ENCODE measurements at regions of chr1 and their contacts with region 1.

Region 1: DNA sequence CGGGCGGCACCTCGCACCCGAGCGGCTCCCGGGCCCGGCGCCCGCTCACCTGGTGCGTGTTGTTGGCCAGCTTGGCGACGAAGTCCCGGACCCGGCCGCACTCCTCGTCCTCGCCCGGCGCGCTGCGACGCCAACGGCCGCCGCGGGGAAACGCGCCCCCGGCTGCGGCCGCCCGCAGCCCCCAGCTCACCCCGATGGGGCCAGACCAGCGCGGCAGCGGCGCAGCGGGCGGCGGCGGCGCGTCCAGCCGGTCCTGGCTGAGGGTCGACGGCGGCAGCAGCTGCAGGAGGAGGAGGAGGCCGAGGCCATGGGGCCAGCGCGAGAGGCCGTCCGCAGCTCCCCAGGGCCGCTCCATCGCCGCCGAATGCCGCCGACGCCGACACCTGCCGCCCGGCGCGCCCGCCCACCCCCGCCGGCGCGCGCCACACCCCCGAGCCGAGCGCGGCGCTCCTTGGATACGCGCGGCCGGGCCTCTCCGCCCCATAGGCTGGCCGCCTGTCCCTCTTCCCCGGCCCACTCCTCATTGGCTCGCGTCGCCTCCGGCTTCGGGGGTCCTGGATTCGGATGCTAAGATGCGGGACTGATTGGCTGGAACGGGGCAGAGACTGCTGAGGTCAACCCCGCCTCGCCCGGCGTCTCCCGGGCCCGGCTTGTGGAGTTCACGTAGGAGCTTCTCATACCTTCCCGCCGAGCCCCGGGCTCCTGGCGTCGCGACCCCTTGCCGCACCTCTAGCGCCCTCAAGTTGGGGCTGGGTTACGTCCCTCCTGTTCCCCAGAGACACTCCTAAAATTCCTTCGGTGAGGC is at the start of gene SORT1:
- DNase-seq: peak; percentile 78
- H3K4me3 ChIP-seq: peak within 1 kb of the TSS; percentile 65
- H3K27ac ChIP-seq: no peak within 1 kb of the TSS
- H3K27me3 ChIP-seq: no peaks in the 10 kb centered on the region
- CTCF ChIP-seq: no peak
- polyA plus RNA-seq, gene SORT1: 37.2 and 42.8 TPM in 2 replicates

Region 2: GRCh38 chr1:109253484-109254141 is 144.1 kb before region 1 on chr1:
- CTCF ChIA-PET with region 1: interaction called, 11 read pairs
- POLR2A ChIA-PET with region 1: no interaction called
- DNase-seq: no peak
- H3K4me3 ChIP-seq: no peak overlapping the region
- H3K27ac ChIP-seq: peak overlapping the region; percentile 39
- H3K27me3 ChIP-seq: no peaks in the 10 kb centered on the region
- CTCF ChIP-seq: 0 out of 2 replicates have a peak, but pooled peaks have one; percentile 3

Region 3: GRCh38 chr1:109277434-109278204 is 120.1 kb before region 1 on chr1:
- CTCF ChIA-PET with region 1: interaction called, 119 read pairs
- POLR2A ChIA-PET with region 1: interaction called, 9 read pairs
- DNase-seq: no peak
- H3K4me3 ChIP-seq: no peak overlapping the region
- H3K27ac ChIP-seq: peak overlapping the region; percentile 31
- H3K27me3 ChIP-seq: no peaks in the 10 kb centered on the region
- CTCF ChIP-seq: peak; percentile 89

Region 4: DNA sequence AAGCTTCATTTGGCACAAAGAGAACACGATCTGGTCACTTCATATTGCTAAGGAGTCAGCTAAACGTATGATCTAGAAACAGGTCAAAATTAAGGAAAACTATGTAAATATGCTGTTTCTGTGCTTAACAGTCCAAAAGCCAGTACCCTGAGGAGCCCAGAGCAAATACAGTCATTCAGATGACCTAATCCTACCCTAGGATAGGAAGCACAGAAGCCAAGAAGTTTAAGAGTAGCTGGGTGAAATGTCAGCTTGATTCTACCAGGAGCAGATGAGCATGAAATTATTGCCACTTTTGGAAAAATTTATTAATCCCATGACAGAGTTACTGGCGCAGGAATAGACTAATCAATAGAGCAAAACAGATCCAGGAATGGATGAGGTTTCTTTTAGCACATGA is 18.3 kb before region 1 on chr1:
- CTCF ChIA-PET with region 1: interaction called, 11 read pairs
- POLR2A ChIA-PET with region 1: interaction called, 8 read pairs
- DNase-seq: no peak
- H3K4me3 ChIP-seq: no peak overlapping the region
- H3K27ac ChIP-seq: no peak overlapping the region
- H3K27me3 ChIP-seq: no peaks in the 10 kb centered on the region
- CTCF ChIP-seq: no peak

Region 5: GRCh38 chr1:109910123-109910962 is 512.6 kb after region 1 on chr1 and contains the start of gene CSF1:
- CTCF ChIA-PET with region 1: no interaction called
- POLR2A ChIA-PET with region 1: no interaction called
- DNase-seq: peak; percentile 77
- H3K4me3 ChIP-seq: peak within 1 kb of the TSS; percentile 98
- H3K27ac ChIP-seq: peak within 1 kb of the TSS; percentile 1
- H3K27me3 ChIP-seq: no peaks in the 10 kb centered on the region
- CTCF ChIP-seq: no peak; the same call in 1 of the 2 replicates
- polyA plus RNA-seq, gene CSF1: 70.1 and 84.1 TPM in 2 replicates

Measured in AG04450 (cell line).